Prostate gland (tissue), 2 donors: ENCODE measurements at regions of chr6 and their contacts with region 1.

Region 1: GRCh38 chr6:67966830-67967229 is 668.3 kb upstream of the ADGRB3 start:
- DNase-seq: no peak
- H3K4me3 ChIP-seq: no peak overlapping the region
- H3K27ac ChIP-seq: no peak overlapping the region
- H3K4me1 ChIP-seq: no peaks in the 10 kb centered on the region
- H3K27me3 ChIP-seq: no peaks in the 10 kb centered on the region
- CTCF ChIP-seq: no peak
- POLR2A ChIP-seq: no peak

Region 2: GRCh38 chr6:67986694-67987232 is 19.9 kb after region 1 on chr6:
- intact Hi-C with region 1: loop called (anchors 2 kb)
- DNase-seq: no peak
- H3K4me3 ChIP-seq: no peak overlapping the region
- H3K27ac ChIP-seq: no peak overlapping the region
- H3K4me1 ChIP-seq: no peaks in the 10 kb centered on the region
- H3K27me3 ChIP-seq: no peaks in the 10 kb centered on the region
- CTCF ChIP-seq: no peak
- POLR2A ChIP-seq: no peak